ENCODE measurements at regions of chr10 and their contacts with region 1.

Region 1: DNA sequence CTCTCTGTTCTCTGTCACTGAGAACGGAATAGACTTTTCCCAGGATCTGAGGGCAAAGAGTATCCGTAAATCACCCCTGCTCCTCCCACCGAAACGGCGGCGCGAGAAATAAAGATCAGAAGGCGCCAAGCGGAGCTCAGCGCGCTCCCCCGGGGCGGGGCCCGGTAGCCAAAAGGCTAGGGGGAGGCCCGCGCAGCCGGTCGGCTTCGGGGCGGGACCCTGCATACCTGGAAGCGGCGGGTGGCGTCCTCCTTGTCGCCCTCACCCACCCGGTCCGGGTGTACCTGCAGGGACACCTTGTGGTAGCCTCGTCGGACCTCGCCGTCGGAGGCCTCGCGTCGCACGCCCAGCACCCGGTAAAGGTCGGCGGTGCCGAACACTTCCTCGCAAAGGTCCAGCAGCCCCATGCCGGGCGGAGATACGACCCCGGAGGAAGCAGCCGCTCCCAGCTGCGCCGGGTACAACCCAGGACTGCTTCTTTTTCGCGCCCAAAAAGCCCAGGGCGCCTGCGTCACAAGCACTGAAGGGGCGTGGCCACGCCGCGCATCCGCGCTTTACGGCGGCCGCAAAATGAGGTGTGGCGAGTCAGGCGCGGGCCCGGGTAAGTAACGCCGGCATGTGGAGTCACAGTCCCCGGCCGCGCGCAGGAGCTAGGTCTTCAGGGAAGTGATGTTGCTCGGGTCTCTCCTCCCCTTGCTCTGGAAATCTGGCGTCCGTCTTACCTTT is at the start of gene DNAJC9:
- DNase-seq: peak; percentile 96
- H3K4me3 Mint-ChIP-seq: peak within 1 kb of the TSS; percentile 99
- H3K27ac Mint-ChIP-seq: peak within 1 kb of the TSS; percentile 95
- H3K4me1 Mint-ChIP-seq: peaks cover 62% of the 10 kb centered on the region
- H3K27me3 Mint-ChIP-seq: no peaks in the 10 kb centered on the region
- total RNA-seq, gene DNAJC9: 50.8 and 52.7 TPM in 2 replicates

Region 2: DNA sequence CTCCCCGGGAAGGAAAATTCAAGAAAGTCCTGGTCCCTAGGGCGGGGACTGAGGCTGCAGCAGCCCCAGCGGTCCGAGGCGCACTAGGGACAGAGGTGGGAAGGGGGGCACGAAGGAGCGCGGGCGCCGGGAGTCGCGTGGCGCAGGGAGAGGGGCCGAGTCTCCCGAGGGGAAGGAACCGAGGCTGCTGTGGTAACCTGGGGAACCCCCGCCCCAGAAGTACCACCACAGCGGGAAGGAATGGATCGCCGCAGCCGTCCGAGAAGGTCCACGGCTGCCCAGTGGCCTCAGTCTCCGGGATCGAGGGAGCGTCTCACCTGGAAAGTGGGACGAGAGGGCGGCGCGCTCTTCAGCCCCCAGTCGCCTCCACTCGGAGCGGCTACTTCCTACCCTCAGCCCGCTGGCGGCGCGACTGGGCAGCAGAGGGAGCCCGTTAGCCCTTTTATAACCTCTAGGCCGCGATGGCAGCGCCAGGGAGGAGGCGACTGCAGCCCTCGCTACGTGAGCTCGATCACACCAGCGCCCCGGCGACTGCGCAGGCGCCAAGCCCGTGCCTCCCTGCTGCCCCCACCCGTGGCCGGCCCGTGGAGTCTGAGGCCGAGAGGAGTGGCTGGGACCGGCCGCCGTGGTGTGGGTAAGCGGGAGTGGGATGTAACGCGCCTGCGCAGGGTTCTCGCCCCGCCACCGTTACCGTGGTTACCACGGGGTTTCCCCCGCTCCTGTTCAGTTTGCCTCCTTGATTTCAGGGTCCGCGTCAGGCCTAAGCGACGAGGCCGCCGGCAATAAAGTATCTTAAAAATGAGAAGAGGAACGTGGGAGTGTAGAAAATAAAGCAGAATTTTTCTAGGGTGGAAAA is 150.3 kb before region 1 on chr10 and contains the start of gene P4HA1:
- intact Hi-C with region 1: loop called (anchors 2 kb)
- DNase-seq: peak; percentile 97
- H3K4me3 Mint-ChIP-seq: peak within 1 kb of the TSS; percentile 89
- H3K27ac Mint-ChIP-seq: peak within 1 kb of the TSS; percentile 90
- H3K4me1 Mint-ChIP-seq: peaks cover 31% of the 10 kb centered on the region
- H3K27me3 Mint-ChIP-seq: no peaks in the 10 kb centered on the region
- total RNA-seq, gene P4HA1: 71.9 and 72.8 TPM in 2 replicates

Region 3: GRCh38 chr10:73296946-73297345 is 50.0 kb after region 1 on chr10:
- intact Hi-C with region 1: no loop called
- DNase-seq: no peak
- H3K4me3 Mint-ChIP-seq: no peak overlapping the region
- H3K27ac Mint-ChIP-seq: no peak overlapping the region
- H3K4me1 Mint-ChIP-seq: peaks cover 9% of the 10 kb centered on the region
- H3K27me3 Mint-ChIP-seq: peaks cover 13% of the 10 kb centered on the region

Region 4: DNA sequence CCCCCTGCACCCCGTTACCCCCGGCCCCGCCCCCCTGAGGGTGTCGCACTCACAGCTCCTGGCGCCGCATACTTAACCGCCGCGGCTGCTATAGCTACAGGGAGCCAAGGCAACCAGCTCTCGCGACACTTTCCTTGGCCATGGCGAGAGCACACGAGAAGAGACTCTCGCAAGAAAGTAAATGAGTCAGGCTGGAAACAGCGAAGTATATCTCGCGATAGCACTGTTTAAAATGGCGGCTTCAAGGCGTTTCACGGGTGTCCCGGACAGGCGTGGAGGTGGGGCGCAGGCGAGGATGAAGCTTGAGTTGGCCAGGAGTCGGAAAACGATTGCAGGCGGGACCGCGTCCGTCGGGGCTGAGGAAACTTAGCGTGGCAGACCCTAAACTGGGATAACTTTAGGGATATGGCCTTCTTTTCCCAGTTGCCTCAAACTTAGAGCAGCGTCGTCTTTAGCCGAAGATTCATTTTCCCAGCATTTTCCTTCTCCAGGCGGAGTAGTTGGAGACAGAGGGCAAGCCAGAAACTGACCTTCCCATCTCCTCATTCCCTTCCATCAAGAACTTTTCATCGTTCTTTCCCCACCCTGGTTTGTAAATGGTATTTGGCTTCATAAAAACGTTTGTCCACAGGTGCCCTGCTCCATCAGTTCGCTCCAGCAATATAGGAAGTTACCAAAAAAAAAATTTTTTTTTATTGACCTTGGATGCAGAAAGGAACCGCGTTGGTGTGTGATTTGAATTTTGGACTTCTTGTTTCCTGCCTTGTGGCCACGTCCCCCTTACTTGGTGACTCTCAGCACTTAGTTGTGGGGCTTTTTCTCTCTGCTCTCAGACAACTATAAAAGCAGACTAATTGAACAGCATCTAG is 379.2 kb after region 1 on chr10:
- intact Hi-C with region 1: loop called (anchors 1 kb)
- DNase-seq: peak; percentile 91
- H3K4me3 Mint-ChIP-seq: peak overlapping the region; percentile 96
- H3K27ac Mint-ChIP-seq: peak overlapping the region; percentile 96
- H3K4me1 Mint-ChIP-seq: peaks cover 11% of the 10 kb centered on the region
- H3K27me3 Mint-ChIP-seq: no peaks in the 10 kb centered on the region

Region 5: GRCh38 chr10:73743905-73744663 is 497.1 kb after region 1 on chr10 and contains the start of gene SEC24C:
- intact Hi-C with region 1: loop called (anchors 5 kb)
- DNase-seq: peak; percentile 93
- H3K4me3 Mint-ChIP-seq: peak within 1 kb of the TSS; percentile 97
- H3K27ac Mint-ChIP-seq: peak within 1 kb of the TSS; percentile 100
- H3K4me1 Mint-ChIP-seq: peaks cover 27% of the 10 kb centered on the region
- H3K27me3 Mint-ChIP-seq: no peaks in the 10 kb centered on the region
- total RNA-seq, gene SEC24C: 119 TPM in 2 replicates